ENCODE measurements at regions of chr9 and their contacts with region 1.

Region 1: GRCh38 chr9:128733256-128733655 is 9.3 kb upstream of the ZDHHC12 start:
- DNase-seq: peak; percentile 96 to 97
- ATAC-seq: peak; percentile 98 to 99
- H3K4me3 ChIP-seq: no peak overlapping the region
- H3K27ac ChIP-seq: peak overlapping the region; percentile 41 to 73; a peak in 5 of 6 replicates
- H3K4me1 ChIP-seq: no peaks in the 10 kb centered on the region
- CTCF ChIP-seq: peak; percentile 94
- EP300 ChIP-seq: no peak
- POLR2A ChIP-seq: no peak
- RAD21 ChIP-seq: peak; percentile 83 to 88

Region 2: GRCh38 chr9:128696923-128697707 is 36.1 kb before region 1 on chr9:
- CTCF ChIA-PET with region 1: interaction called, 10 read pairs
- POLR2A ChIA-PET with region 1: interaction called, 10 read pairs
- DNase-seq: no peak
- ATAC-seq: peak in 1 of 2 experiments; percentile 22; a peak in 1 of 6 replicates
- H3K4me3 ChIP-seq: no peak overlapping the region
- H3K27ac ChIP-seq: no peak overlapping the region
- H3K4me1 ChIP-seq: peaks cover 15% of the 10 kb centered on the region
- CTCF ChIP-seq: no peak
- EP300 ChIP-seq: no peak
- POLR2A ChIP-seq: no peak
- RAD21 ChIP-seq: no peak

Region 3: GRCh38 chr9:128750926-128751595 is 17.8 kb after region 1 on chr9:
- CTCF ChIA-PET with region 1: interaction called, 40 read pairs
- POLR2A ChIA-PET with region 1: no interaction called
- DNase-seq: no peak
- ATAC-seq: no peak; a peak in 1 of 6 replicates
- H3K4me3 ChIP-seq: no peak overlapping the region
- H3K27ac ChIP-seq: no peak overlapping the region
- H3K4me1 ChIP-seq: no peaks in the 10 kb centered on the region
- CTCF ChIP-seq: no peak
- EP300 ChIP-seq: no peak
- POLR2A ChIP-seq: no peak
- RAD21 ChIP-seq: no peak

Region 4: DNA sequence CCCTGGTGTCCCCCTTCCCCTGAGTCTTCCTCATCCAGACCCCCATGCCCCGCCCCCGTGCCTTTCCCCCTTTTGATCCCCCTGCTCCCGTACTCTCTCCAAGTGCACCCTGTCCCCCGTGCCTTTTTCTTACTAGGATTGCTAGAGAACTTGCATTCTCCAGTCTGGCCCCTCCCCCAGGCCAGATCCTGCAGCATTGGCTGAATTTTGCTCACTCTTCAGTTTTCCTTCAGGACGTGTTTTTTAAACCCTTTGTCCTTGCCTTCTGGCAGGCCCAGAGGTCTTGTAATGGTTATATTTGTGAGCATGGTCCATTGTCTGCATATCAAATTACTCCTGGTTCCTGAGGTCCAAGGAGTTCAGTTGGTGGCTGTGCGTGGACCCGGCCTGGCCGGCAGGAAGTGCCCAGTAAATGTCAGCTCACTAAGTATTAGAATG is 54.4 kb after region 1 on chr9:
- CTCF ChIA-PET with region 1: interaction called, 10 read pairs
- POLR2A ChIA-PET with region 1: no interaction called
- DNase-seq: peak in 1 of 2 experiments; percentile 33
- ATAC-seq: peak in 1 of 2 experiments; percentile 14; a peak in 3 of 6 replicates
- H3K4me3 ChIP-seq: peak overlapping the region; percentile 83
- H3K27ac ChIP-seq: peak overlapping the region; percentile 82 to 99
- H3K4me1 ChIP-seq: peaks cover 14% of the 10 kb centered on the region
- CTCF ChIP-seq: no peak
- EP300 ChIP-seq: no peak
- POLR2A ChIP-seq: no peak
- RAD21 ChIP-seq: no peak

Region 5: DNA sequence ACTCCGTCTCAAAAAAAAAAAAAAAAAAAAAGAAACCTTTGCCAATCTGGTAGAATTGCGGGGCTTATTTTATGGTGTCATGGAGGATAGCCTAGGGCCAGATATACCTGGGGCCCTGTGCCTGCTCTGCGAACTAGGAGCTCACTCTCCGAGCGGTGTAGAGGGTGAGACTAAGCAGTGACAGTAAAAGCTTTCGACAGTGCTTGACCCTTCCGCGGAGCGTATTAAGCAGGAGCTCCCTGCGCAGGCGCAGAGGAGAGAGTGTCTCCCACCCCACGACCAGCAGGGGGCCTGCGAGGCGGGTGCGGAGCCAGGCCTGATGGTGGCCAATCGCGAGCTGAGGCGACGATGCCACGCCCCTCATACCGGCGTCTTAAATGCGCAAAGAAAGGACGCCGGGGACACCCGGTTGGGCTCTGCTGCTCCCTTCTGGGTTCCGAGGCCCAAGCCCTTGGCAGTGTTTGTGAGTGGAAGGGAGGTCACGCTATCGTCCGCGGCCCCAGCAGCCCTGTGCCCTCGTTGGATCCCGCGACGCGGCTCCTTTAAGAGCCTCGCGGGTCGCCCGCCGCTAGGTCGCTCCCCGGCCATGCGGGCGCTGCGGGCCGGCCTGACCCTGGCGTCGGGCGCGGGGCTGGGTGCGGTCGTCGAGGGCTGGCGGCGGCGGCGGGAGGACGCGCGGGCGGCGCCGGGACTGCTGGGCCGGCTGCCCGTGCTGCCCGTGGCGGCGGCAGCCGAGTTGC is 85.0 kb after region 1 on chr9 and contains the start of gene ENDOG:
- CTCF ChIA-PET with region 1: interaction called, 30 read pairs
- POLR2A ChIA-PET with region 1: no interaction called
- DNase-seq: peak; percentile 97 to 98
- ATAC-seq: peak; percentile 86 to 92
- H3K4me3 ChIP-seq: peak within 1 kb of the TSS; percentile 76
- H3K27ac ChIP-seq: peak within 1 kb of the TSS; percentile 90 to 93
- H3K4me1 ChIP-seq: peaks cover 11% of the 10 kb centered on the region
- CTCF ChIP-seq: peak; percentile 72
- EP300 ChIP-seq: no peak
- POLR2A ChIP-seq: peak; percentile 96
- RAD21 ChIP-seq: peak; percentile 22 to 31; a peak in 1 of 5 replicates
- polyA plus RNA-seq, gene ENDOG: 12.6 and 12.8 TPM in 2 replicates

Region 6: GRCh38 chr9:128870128-128870952 is 137.1 kb after region 1 on chr9:
- CTCF ChIA-PET with region 1: no interaction called
- POLR2A ChIA-PET with region 1: no interaction called
- DNase-seq: no peak
- ATAC-seq: peak in 1 of 2 experiments; percentile 32; a peak in 2 of 6 replicates
- H3K4me3 ChIP-seq: no peak overlapping the region
- H3K27ac ChIP-seq: peak overlapping the region; percentile 2 to 57; a peak in 2 of 6 replicates
- H3K4me1 ChIP-seq: peaks cover 33% of the 10 kb centered on the region
- CTCF ChIP-seq: no peak
- EP300 ChIP-seq: no peak
- POLR2A ChIP-seq: no peak
- RAD21 ChIP-seq: no peak